ENCODE measurements at regions of chr2 and their contacts with region 1.

Region 1: DNA sequence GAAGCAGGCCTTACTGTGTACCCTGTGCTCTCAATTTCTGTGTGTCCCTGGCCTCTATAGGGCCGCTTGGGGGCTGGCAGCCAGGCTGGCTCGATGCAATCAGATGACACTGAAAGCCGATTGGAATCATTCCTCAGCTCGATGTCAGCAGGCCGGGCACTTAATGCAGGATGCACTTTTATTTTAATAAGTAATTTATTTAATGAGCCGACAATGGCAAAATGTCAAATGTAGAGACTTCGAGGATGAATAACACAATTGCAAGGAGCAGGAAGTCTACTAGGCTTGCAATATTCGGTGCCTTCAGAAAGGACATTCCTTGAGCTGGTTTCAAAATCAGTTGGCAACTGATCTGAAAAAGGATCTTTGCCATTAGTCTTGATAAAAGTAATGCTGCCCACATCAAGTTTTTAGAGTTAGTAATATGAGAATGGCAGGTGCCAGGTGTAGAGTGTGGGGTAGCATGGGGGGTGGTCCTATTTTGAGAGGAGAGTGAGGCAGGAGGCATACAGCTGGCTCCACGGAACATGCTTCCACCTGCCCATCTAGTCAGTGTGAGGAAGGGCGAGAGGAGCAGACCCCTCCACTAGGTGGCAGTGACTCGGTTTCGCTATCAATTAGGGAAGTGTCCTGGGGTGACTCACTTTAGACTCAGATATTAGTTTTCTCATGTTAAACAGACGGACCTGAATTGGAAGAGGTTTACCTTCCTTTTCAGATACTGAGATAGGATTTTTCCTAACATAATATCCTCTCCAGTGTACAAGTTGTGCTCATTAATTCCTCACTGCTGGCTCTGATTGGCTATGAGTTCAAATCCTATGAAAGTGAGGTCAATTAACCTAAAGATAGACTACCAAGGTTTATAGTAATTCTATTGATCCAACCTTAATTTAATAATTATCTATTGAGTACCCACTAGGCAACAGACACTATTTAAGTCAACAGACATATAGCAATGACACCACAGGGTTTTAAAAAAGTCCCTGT is 80.9 kb downstream of the NABP1 start:
- DNase-seq: peak; percentile 71
- ATAC-seq: peak; percentile 100
- H3K4me3 ChIP-seq: peak overlapping the region; percentile 7 to 47 (median 25); a peak in 4 of 6 replicates
- H3K27ac ChIP-seq: no peak overlapping the region
- H3K4me1 ChIP-seq: no peaks in the 10 kb centered on the region
- H3K27me3 ChIP-seq: no peaks in the 10 kb centered on the region; a peak in 1 of 5 replicates
- CTCF ChIP-seq: peak; percentile 89
- EP300 ChIP-seq: no peak
- POLR2A ChIP-seq: no peak
- RAD21 ChIP-seq: 0 out of 2 replicates have a peak, but pooled peaks have one; percentile 26

Region 2: GRCh38 chr2:189933911-189934399 is 1824.9 kb before region 1 on chr2:
- CTCF ChIA-PET with region 1: no interaction called
- POLR2A ChIA-PET with region 1: no interaction called
- in situ Hi-C with region 1: no loop called
- intact Hi-C with region 1: no loop called
- DNase-seq: no peak
- ATAC-seq: no peak
- H3K4me3 ChIP-seq: no peak overlapping the region
- H3K27ac ChIP-seq: no peak overlapping the region
- H3K4me1 ChIP-seq: no peaks in the 10 kb centered on the region
- H3K27me3 ChIP-seq: no peaks in the 10 kb centered on the region
- CTCF ChIP-seq: no peak
- EP300 ChIP-seq: no peak
- POLR2A ChIP-seq: no peak
- RAD21 ChIP-seq: no peak

Region 3: GRCh38 chr2:191566344-191566743 is 192.5 kb before region 1 on chr2:
- CTCF ChIA-PET with region 1: no interaction called
- POLR2A ChIA-PET with region 1: no interaction called
- in situ Hi-C with region 1: no loop called
- intact Hi-C with region 1: loop called (anchors 2 kb)
- DNase-seq: peak; percentile 71
- ATAC-seq: peak; percentile 96
- H3K4me3 ChIP-seq: no peak overlapping the region
- H3K27ac ChIP-seq: no peak overlapping the region
- H3K4me1 ChIP-seq: peaks cover 11% of the 10 kb centered on the region
- H3K27me3 ChIP-seq: no peaks in the 10 kb centered on the region
- CTCF ChIP-seq: peak; percentile 88
- EP300 ChIP-seq: no peak
- POLR2A ChIP-seq: no peak
- RAD21 ChIP-seq: peak; percentile 75

Region 4: GRCh38 chr2:191836853-191837769 is 78.3 kb after region 1 on chr2:
- CTCF ChIA-PET with region 1: no interaction called
- POLR2A ChIA-PET with region 1: no interaction called
- in situ Hi-C with region 1: no loop called
- intact Hi-C with region 1: no loop called
- DNase-seq: no peak
- ATAC-seq: no peak
- H3K4me3 ChIP-seq: no peak overlapping the region
- H3K27ac ChIP-seq: no peak overlapping the region
- H3K4me1 ChIP-seq: peaks cover 32% of the 10 kb centered on the region
- H3K27me3 ChIP-seq: no peaks in the 10 kb centered on the region
- CTCF ChIP-seq: no peak
- EP300 ChIP-seq: no peak
- POLR2A ChIP-seq: no peak
- RAD21 ChIP-seq: no peak

Region 5: DNA sequence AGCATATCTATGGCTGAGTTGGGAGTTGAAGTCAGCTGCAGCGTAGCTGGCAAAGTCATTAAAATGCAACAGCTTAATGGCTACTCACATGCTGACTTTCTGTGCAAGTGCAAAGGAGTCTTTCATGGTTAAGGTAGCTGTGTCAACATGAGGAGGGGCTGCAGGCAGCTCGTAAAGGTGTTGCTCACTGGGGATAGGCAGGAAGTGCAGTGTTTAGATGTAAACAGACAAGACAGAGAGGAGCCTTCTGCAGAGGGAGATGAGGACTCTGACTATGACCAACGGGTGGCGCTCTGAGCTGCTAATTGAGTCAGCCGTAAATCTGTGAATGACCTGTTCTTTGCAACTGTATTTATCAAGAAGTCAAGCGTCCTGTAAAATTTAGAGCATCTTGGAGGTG is 110.4 kb after region 1 on chr2:
- CTCF ChIA-PET with region 1: no interaction called
- POLR2A ChIA-PET with region 1: no interaction called
- in situ Hi-C with region 1: no loop called
- intact Hi-C with region 1: loop called (anchors 2 kb)
- DNase-seq: peak; percentile 67
- ATAC-seq: peak; percentile 8; the same call in 1 of the 3 replicates
- H3K4me3 ChIP-seq: no peak overlapping the region
- H3K27ac ChIP-seq: peak overlapping the region; percentile 1
- H3K4me1 ChIP-seq: peaks cover 69% of the 10 kb centered on the region
- H3K27me3 ChIP-seq: no peaks in the 10 kb centered on the region
- CTCF ChIP-seq: peak; percentile 74
- EP300 ChIP-seq: peak in 1 of 2 experiments; percentile 64; a peak in 1 of 4 replicates
- POLR2A ChIP-seq: no peak
- RAD21 ChIP-seq: peak; percentile 38; the same call in 1 of the 2 replicates

Measured in HepG2 (cell line).